Ascending aorta (tissue), 2 donors: ENCODE measurements at regions of chr13 and their contacts with region 1.

Region 1: GRCh38 chr13:108155185-108156106 is 59.9 kb downstream of the LIG4 start:
- DNase-seq: no peak
- H3K4me3 ChIP-seq: no peak overlapping the region
- H3K27ac ChIP-seq: no peak overlapping the region
- H3K4me1 ChIP-seq: no peaks in the 10 kb centered on the region
- H3K27me3 ChIP-seq: no peaks in the 10 kb centered on the region
- CTCF ChIP-seq: peak; percentile 22 to 70 (median 64)

Region 2: GRCh38 chr13:107211073-107211472 is 944.4 kb before region 1 on chr13:
- intact Hi-C with region 1: loop called (anchors 1 kb)
- DNase-seq: peak in 1 of 2 donors; percentile 78
- H3K4me3 ChIP-seq: peak overlapping the region; percentile 33
- H3K27ac ChIP-seq: no peak overlapping the region
- H3K4me1 ChIP-seq: peaks cover 0 to 7% of the 10 kb centered on the region in 2 donors
- H3K27me3 ChIP-seq: no peaks in the 10 kb centered on the region
- CTCF ChIP-seq: peak; percentile 51 to 86 (median 84)

Region 3: GRCh38 chr13:107407074-107407473 is 748.4 kb before region 1 on chr13:
- intact Hi-C with region 1: no loop called
- DNase-seq: no peak
- H3K4me3 ChIP-seq: no peak overlapping the region
- H3K27ac ChIP-seq: no peak overlapping the region
- H3K4me1 ChIP-seq: no peaks in the 10 kb centered on the region
- H3K27me3 ChIP-seq: no peaks in the 10 kb centered on the region
- CTCF ChIP-seq: no peak